ENCODE measurements at regions of chr13 and their contacts with region 1.

Region 1: GRCh38 chr13:42991892-42992763 is at the start of gene EPSTI1:
- DNase-seq: peak; percentile 92
- ATAC-seq: peak; percentile 87
- H3K4me3 Mint-ChIP-seq: peak within 1 kb of the TSS; percentile 97
- H3K27ac Mint-ChIP-seq: peak within 1 kb of the TSS; percentile 99
- H3K4me1 Mint-ChIP-seq: peaks cover 56% of the 10 kb centered on the region
- H3K27me3 Mint-ChIP-seq: no peaks in the 10 kb centered on the region
- total RNA-seq, gene EPSTI1: 71.3 to 150 TPM

Region 2: DNA sequence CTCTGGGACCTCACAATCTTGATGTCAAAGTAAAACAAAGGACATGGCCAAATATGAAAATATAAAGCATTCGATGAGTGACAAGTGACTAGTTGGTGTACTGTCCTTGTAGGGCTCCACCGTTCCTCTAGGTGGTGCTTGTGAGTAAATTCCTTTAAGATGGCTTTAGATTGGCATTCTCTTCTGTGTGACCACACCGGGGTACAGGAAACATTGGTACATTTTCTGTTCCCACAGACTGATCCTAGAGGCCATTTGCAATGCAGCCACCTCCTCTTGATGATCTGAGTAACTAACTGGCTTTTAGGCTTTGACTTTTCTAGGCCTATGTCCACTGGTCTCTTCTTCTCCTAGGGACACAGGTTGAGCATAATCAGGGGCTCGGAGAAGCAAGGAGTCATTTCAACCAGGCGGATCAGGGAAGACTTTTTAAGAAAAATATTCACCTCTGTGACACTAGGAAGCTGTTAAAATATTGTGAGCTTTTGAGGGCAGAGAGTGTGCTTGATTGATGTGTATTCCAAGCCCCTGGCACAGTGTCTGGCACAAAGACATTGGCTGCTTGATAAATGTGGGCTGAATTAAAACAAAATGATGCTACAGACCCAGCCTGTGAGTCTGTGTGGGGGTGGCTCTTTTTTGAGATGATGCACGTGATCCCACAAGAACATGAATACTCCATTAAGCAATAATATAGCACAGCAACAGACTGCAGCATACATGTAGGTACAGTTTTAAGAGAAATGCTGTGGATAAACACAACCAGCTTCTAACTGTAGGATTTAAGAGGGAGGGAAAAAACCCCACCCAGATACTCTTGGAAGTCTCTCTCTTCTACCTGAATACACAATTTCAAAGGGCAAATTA is 21.1 kb before region 1 on chr13:
- CTCF ChIA-PET with region 1: interaction called, 15 read pairs
- DNase-seq: peak; percentile 68
- ATAC-seq: peak; percentile 86
- H3K4me3 Mint-ChIP-seq: no peak overlapping the region
- H3K27ac Mint-ChIP-seq: peak overlapping the region; percentile 62
- H3K4me1 Mint-ChIP-seq: peaks cover 30% of the 10 kb centered on the region
- H3K27me3 Mint-ChIP-seq: no peaks in the 10 kb centered on the region

Region 3: DNA sequence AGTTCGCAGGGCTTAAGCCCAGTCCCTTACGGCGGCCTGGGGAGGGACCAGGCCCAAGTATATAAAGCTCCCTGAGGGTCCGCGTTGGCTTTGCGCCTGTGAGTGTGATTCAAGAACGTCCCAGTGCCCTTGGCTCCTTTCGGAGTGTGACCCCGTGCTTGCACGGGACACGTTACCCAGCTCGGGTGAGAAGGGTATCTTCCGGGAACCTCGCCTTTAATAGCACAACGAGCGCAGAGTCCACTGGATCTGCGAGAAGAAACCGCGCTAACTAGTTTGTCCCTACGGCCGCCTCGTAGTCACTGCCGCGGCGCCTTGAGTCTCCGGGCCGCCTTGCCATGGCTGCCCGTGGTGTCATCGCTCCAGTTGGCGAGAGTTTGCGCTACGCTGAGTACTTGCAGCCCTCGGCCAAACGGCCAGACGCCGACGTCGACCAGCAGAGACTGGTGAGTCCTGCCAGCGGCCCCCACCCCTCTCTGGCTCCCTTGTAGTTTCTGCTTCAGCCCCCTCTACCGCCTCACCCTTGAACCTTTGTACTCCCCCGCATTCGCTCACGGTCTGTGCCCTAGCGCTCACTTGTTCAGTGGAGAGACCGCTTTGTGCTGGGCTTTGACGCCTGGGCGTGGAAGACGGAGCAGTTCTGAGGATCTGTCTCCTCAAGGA is 31.3 kb after region 1 on chr13 and contains the start of gene DNAJC15:
- CTCF ChIA-PET with region 1: interaction called, 12 read pairs
- DNase-seq: peak; percentile 89
- ATAC-seq: peak; percentile 93
- H3K4me3 Mint-ChIP-seq: peak within 1 kb of the TSS; percentile 99
- H3K27ac Mint-ChIP-seq: peak within 1 kb of the TSS; percentile 97
- H3K4me1 Mint-ChIP-seq: peaks cover 33% of the 10 kb centered on the region
- H3K27me3 Mint-ChIP-seq: no peaks in the 10 kb centered on the region
- total RNA-seq, gene DNAJC15: 14.4 to 14.8 TPM